ENCODE measurements at regions of chr6 and their contacts with region 1.

Region 1: GRCh38 chr6:797479-798077 is 104.6 kb upstream of the EXOC2 start:
- DNase-seq: peak; percentile 65
- ATAC-seq: peak; percentile 75
- H3K4me3 Mint-ChIP-seq: no peak overlapping the region
- H3K27ac Mint-ChIP-seq: no peak overlapping the region
- H3K4me1 Mint-ChIP-seq: no peaks in the 10 kb centered on the region
- H3K27me3 Mint-ChIP-seq: peaks cover 35% of the 10 kb centered on the region
- CTCF ChIP-seq: peak; percentile 91

Region 2: GRCh38 chr6:786946-787763 is 10.4 kb before region 1 on chr6:
- CTCF ChIA-PET with region 1: interaction called, 18 read pairs
- POLR2A ChIA-PET with region 1: no interaction called
- intact Hi-C with region 1: no loop called
- DNase-seq: peak; percentile 22
- ATAC-seq: no peak
- H3K4me3 Mint-ChIP-seq: no peak overlapping the region
- H3K27ac Mint-ChIP-seq: peak overlapping the region; percentile 83
- H3K4me1 Mint-ChIP-seq: peaks cover 23% of the 10 kb centered on the region
- H3K27me3 Mint-ChIP-seq: peaks cover 2% of the 10 kb centered on the region
- CTCF ChIP-seq: peak; percentile 71

Region 3: GRCh38 chr6:815348-815738 is 17.8 kb after region 1 on chr6:
- CTCF ChIA-PET with region 1: interaction called, 14 read pairs
- POLR2A ChIA-PET with region 1: no interaction called
- intact Hi-C with region 1: no loop called
- DNase-seq: no peak
- ATAC-seq: no peak
- H3K4me3 Mint-ChIP-seq: no peak overlapping the region
- H3K27ac Mint-ChIP-seq: no peak overlapping the region
- H3K4me1 Mint-ChIP-seq: peaks cover 25% of the 10 kb centered on the region
- H3K27me3 Mint-ChIP-seq: peaks cover 5% of the 10 kb centered on the region
- CTCF ChIP-seq: no peak